ENCODE measurements at regions of chr19 and their contacts with region 1.

Region 1: DNA sequence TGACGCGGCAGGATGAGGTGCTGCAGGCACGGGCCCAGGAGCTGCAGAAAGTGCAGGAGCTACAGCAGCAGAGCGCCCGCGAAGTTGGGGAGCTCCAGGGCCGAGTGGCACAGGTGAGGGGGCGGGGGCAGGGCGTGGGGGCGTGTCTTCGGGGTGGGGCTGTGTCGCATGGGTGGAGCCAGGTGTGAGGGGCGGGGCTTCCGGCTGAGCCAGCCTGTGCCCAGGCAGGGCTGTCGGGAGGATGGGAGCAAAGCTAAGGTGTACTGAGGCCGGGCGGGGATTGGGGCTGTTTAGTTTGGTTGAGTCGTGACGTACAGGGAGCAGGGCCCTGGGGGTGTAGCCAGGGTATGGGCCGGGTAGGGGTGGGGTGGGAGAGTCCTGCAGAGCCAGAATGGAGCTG is 62.3 kb downstream of the KCNC3 start:
- DNase-seq: peak; percentile 96
- ATAC-seq: peak; percentile 99
- H3K4me3 Mint-ChIP-seq: peak overlapping the region; percentile 32
- H3K27ac Mint-ChIP-seq: no peak overlapping the region
- H3K4me1 Mint-ChIP-seq: peaks cover 8% of the 10 kb centered on the region
- H3K27me3 Mint-ChIP-seq: no peaks in the 10 kb centered on the region
- CTCF ChIP-seq: no peak

Region 2: DNA sequence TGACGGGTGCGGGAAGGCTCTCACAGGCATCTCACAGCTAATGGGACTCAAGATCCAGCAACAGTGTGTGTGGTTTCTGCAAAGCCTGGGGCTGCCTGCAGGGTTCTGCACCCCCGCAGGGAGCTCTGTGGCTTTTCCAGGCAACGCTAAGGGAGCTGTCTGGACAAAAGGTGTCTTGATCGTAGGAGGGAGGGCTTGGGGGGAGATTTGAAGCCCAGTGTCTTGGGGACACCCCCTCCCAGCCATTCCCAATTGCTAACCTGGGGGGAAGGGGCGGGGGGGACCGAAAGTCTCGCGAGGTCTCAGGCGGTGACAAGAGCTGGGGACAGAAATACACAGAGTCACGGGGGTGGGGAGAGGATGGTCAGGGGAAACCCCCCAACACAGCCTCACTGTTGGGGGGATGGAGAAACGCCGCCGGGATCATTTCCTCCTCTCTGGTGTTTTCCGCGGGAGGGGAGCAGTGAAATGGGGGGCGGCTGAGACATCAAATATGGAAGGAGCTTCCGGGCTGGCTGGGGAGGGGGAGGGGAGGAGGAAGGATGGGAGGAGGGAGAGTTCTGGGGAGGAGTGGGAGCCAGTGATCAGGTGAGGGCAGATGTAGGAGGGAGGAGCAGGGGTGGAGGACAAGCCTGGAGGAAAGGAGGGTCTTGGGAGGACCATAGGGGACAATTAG is 49.0 kb after region 1 on chr19:
- CTCF ChIA-PET with region 1: interaction called, 16 read pairs
- POLR2A ChIA-PET with region 1: interaction called, 9 read pairs
- DNase-seq: peak; percentile 75
- ATAC-seq: peak; percentile 24
- H3K4me3 Mint-ChIP-seq: peak overlapping the region; percentile 82
- H3K27ac Mint-ChIP-seq: peak overlapping the region; percentile 98
- H3K4me1 Mint-ChIP-seq: peaks cover 30% of the 10 kb centered on the region
- H3K27me3 Mint-ChIP-seq: peaks cover 6% of the 10 kb centered on the region
- CTCF ChIP-seq: no peak

Region 3: DNA sequence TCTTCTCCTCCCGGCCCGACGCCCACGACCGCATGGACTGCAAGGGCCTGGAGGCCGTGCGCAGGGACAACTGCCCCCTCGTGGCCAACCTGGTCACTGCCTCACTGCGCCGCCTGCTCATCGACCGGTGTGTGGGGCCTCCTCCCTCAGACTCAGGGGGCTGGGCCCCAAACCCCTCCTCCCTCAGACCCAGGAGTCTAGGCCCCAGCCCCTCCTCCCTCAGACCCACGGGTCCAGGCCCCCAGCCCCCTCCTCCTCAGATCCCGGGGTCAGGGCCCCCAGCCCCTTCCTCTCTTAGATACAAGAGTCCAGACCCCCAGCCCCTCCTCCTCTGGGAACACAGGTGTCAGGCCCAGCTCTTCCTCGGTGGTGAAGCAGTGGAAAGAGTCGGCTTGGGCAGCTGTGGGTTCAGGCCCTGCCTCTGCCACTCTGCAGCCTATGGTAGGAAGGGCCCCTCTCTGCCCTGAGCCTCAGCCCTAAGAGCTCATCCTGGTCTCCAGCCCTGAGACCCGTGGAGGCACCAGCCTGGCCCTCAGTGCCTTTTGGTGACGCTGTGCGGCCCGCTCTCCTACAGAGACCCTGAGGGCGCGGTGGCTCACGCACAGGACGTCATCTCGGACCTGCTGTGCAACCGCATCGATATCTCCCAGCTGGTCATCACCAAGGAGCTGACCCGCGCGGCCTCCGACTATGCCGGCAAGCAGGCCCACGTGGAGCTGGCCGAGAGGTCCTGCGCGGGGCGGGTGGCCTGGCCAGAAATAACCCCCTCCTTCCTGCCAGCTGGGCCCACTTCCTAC is 148.2 kb after region 1 on chr19:
- CTCF ChIA-PET with region 1: no interaction called
- POLR2A ChIA-PET with region 1: no interaction called
- DNase-seq: peak; percentile 95
- ATAC-seq: peak; percentile 83
- H3K4me3 Mint-ChIP-seq: no peak overlapping the region
- H3K27ac Mint-ChIP-seq: no peak overlapping the region
- H3K4me1 Mint-ChIP-seq: peaks cover 18% of the 10 kb centered on the region
- H3K27me3 Mint-ChIP-seq: no peaks in the 10 kb centered on the region; the same call in 1 of the 2 replicates
- CTCF ChIP-seq: peak; percentile 93